Vagina (tissue), 2 donors: ENCODE measurements at regions of chr2 and their contacts with region 1.

Region 1: GRCh38 chr2:47819834-47820233 is 36.9 kb downstream of the MSH6 start:
- DNase-seq: no peak
- H3K4me3 ChIP-seq: no peak overlapping the region
- H3K27ac ChIP-seq: no peak overlapping the region
- H3K4me1 ChIP-seq: no peaks in the 10 kb centered on the region
- H3K27me3 ChIP-seq: no peaks in the 10 kb centered on the region
- CTCF ChIP-seq: no peak
- POLR2A ChIP-seq: no peak

Region 2: GRCh38 chr2:46171411-46171953 is 1648.4 kb before region 1 on chr2:
- intact Hi-C with region 1: loop called (anchors 5 kb)
- DNase-seq: no peak
- H3K4me3 ChIP-seq: no peak overlapping the region
- H3K27ac ChIP-seq: peak overlapping the region; percentile 51
- H3K4me1 ChIP-seq: peaks cover 30% of the 10 kb centered on the region
- H3K27me3 ChIP-seq: no peaks in the 10 kb centered on the region
- CTCF ChIP-seq: no peak
- POLR2A ChIP-seq: no peak